ACHN (cell line): ENCODE measurements at regions of chr11 and their contacts with region 1.

Region 1: DNA sequence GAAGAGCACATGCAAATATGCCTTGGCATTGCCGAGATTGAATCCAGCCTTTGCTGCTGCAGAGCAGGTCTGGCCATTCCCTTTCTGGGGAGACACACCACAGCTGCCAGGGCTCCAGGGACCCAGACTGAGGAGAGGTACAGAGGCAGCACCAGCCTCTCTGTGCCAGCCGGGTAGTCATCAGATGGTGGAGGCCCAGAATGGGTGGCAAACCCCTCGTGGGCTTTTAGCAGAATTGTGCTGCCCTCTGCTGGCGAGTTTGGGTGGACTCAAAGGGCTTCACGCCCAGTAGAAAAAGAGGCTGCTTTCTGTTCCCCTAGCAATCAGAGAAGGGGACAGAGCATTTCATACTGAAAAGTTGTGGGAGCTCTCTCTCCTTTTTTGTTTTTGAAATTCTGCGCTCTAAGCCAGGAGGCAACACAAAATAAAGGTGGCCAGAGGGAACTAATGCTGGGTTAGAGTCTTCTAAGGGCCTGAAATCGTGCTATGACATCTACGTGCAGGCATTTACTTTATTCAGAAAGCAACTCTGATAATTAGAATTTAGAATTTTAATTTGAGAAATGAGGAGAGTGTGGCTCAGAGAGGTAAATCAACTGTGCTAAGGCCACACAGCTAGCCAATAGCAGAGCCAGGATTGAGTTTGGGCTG is 158.8 kb upstream of the NAV2 start:
- DNase-seq: peak; percentile 65

Region 2: GRCh38 chr11:19349340-19350031 is 204.3 kb before region 1 on chr11:
- in situ Hi-C with region 1: no loop called
- DNase-seq: no peak

Region 3: GRCh38 chr11:19398772-19399527 is 154.9 kb before region 1 on chr11:
- in situ Hi-C with region 1: no loop called
- DNase-seq: no peak

Region 4: DNA sequence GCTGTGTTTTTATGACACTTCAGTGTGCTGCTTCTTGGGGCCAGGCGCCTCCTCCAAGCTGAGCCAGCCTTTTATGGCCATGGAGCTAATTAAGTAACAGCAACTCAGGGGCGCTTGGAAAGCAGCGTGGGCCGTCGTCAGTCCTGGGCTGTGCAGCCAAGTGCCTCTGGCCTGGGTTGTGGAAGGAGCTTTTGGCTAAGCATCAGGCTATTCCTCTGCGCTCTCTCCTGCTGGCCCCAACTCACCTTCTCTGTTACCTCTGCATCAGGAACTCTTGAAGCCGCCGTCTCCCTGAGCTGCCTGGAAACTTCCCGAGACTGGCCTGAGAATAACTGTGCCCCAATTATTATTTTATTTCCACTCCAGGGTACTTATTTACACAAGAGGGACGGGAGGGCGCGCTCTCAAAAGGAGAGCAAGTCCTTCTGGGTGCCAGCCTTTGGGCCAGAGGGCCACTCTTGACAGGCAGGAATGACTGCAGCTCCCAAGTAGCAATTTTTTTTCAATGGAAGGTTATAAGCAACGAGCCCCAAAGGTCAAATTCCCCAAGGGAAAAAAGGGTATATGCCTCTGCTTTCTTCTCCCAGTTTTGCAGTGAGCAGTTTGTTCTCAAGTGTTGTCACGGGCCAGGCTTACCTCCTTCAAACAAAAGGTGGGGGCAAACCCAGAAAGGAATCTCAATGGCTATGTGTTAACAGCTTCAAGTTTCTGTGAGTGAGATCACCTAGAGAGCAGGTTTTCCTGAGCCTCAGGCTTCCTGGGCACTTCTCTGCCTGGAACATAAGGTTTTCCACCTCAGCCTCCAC is 120.3 kb after region 1 on chr11:
- in situ Hi-C with region 1: no loop called
- DNase-seq: no peak

Region 5: DNA sequence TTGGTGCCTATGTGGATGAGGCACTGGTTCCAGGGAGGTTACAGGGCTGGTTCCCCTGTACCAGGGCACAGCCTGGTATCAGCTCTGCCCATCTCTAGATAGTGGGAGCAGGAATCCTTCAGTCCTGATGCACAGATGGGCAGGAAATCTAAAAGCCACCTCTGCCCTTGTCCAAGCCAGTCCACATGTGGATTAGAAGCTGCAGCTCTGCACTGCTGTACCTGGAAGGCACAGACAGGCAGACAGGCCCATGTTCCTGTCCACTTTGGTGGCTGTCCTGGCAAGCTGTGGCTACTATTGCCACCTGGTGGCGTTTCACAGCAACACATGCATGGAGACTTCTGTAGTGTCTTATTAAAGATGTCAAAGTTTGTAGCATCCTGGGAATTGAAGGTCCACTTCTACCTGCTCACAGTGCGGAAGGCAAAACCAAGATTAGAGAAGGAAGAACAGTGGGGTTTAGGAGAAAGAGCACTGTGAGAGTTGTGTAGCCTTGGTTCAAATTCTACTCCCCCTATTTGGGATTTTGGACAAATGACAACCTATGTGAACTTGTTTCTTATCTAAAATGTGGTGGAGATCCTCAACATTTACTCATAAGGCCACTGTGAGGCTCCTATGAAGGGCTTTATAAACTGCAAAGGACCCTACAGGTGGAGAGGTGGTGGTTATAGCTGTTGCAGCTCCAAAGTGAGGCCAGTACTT is 188.9 kb after region 1 on chr11:
- in situ Hi-C with region 1: loop called (anchors 25 kb)
- DNase-seq: peak; percentile 70